Activated CD4-positive, alpha-beta T cell treated with anti-CD3 and anti-CD28 coated beads for 36 hours (primary cell): ENCODE measurements at regions of chr20 and their contacts with region 1.

Region 1: GRCh38 chr20:46970923-46971616 is 76.4 kb downstream of the EYA2 start:
- DNase-seq: peak; percentile 16
- ATAC-seq: peak; percentile 75
- H3K4me3 Mint-ChIP-seq: no peak overlapping the region
- H3K27ac Mint-ChIP-seq: no peak overlapping the region
- H3K4me1 Mint-ChIP-seq: peaks cover 2% of the 10 kb centered on the region
- H3K27me3 Mint-ChIP-seq: peaks cover 23% of the 10 kb centered on the region

Region 2: GRCh38 chr20:46994341-46994740 is 23.3 kb after region 1 on chr20:
- CTCF ChIA-PET with region 1: no interaction called
- POLR2A ChIA-PET with region 1: no interaction called
- intact Hi-C with region 1: loop called in 1 of 2 experiments (anchors 1 kb)
- DNase-seq: peak; percentile 84
- ATAC-seq: peak; percentile 98
- H3K4me3 Mint-ChIP-seq: peak overlapping the region; percentile 42
- H3K27ac Mint-ChIP-seq: peak overlapping the region; percentile 64
- H3K4me1 Mint-ChIP-seq: peaks cover 22% of the 10 kb centered on the region
- H3K27me3 Mint-ChIP-seq: peaks cover 34% of the 10 kb centered on the region